ENCODE measurements at regions of chr2 and their contacts with region 1.

Region 1: DNA sequence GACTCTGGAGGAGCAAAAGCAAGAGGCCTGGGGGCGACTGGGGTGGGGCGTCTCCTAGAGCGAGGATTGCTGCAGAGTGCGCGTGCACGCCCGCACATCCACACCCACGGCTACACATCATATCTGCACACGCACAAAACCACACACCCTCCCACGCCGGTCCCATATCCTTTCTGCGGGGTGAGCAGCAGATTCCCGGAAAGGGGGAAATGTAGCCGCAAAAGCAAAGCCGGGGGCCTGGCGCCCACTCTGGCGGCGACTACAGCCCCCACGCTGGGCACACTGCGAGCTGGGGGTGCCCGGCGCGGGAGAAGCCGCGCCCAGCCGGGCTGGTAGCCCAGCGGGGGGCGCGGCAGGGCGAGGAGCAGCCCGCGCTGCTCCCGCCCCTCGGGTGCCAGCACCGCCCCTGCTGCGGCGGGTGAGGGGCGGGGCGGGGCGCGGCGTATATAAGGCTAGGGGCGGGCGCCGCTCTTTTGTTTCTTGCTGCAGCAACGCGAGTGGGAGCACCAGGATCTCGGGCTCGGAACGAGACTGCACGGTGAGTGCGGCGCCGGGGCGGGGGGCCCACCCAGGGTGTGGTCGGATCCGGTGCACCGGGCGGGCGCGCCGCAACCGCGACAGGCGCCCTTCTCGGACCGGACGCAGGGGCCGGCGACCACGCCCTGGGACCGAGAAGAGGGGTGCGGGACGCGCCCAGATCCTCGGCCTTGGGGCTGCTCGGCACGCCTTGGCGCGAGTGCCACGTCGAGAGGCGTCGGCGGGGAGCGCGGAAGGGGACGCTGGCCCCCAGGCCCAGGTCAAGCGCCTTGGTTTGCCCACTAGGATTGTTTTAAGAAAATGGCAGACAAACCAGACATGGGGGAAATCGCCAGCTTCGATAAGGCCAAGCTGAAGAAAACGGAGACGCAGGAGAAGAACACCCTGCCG is at the start of gene TMSB10:
- DNase-seq: peak in 1 of 2 experiments; percentile 87
- H3K4me3 ChIP-seq: peak within 1 kb of the TSS; percentile 82 to 99 (median 90)
- H3K27ac ChIP-seq: peak within 1 kb of the TSS; percentile 62; the same call in 1 of the 2 replicates
- H3K4me1 ChIP-seq: peaks cover 0 to 14% (median 7%) of the 10 kb centered on the region in 4 experiments
- H3K27me3 ChIP-seq: peaks cover 0 to 10% (median 8%) of the 10 kb centered on the region in 4 experiments; a peak in 6 of 7 replicates
- CTCF ChIP-seq: no peak
- EP300 ChIP-seq: no peak
- POLR2A ChIP-seq: peak in 1 of 2 experiments; percentile 70; a peak in 2 of 3 replicates
- RAD21 ChIP-seq: no peak
- total RNA-seq, gene TMSB10: 1,075 and 1,095 TPM in 2 replicates

Region 2: GRCh38 chr2:84881581-84882414 is 23.6 kb before region 1 on chr2:
- CTCF ChIA-PET with region 1: interaction called, 31 read pairs
- POLR2A ChIA-PET with region 1: interaction called, 3 read pairs
- DNase-seq: peak in 1 of 2 experiments; percentile 92
- H3K4me3 ChIP-seq: peak overlapping the region; percentile 48 to 75 (median 62)
- H3K27ac ChIP-seq: no peak overlapping the region
- H3K4me1 ChIP-seq: peaks cover 0 to 3% (median under 1%) of the 10 kb centered on the region in 4 experiments; a peak in 3 of 7 replicates
- H3K27me3 ChIP-seq: peaks cover 12 to 42% (median 39%) of the 10 kb centered on the region in 4 experiments
- CTCF ChIP-seq: peak; percentile 66 to 86 (median 72)
- EP300 ChIP-seq: no peak
- POLR2A ChIP-seq: peak in 1 of 2 experiments; percentile 12; a peak in 1 of 3 replicates
- RAD21 ChIP-seq: peak; percentile 80 to 82

Region 3: DNA sequence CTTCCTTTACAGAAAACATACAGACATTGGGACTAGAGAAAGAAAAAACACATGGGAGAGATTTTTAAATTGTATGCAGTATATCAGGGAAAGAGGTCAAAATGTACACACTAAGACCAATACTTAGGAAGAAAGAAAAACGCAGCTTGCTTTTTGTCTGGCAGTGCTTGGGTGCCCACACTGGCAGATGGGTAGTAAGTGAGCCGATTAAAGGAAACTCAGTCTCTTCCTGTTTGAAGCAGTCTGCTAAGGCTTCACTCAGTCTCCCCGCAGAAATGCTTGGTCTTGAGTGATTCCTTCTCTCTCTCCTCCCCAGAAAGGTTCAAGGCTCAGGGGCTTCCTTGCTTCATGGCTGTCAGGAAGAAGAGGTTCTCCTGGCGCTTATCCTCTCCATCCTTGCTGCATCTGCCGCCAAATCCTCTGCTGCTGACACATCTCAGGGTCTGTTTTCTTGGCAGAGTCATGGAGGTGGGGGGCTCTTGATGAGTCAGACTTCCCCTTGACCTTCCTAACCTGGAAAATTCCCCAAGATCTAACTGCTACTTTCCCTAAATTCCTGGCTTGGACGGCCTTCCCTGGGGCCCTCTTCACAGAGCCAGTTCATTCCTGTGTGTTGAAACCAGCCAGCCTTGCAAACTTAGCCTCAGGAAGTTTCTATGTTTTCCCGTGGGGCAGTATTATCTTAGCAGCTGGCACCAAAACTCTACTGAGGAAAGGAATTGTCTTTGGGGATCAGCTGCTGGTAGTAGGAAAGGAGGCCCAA is 10.5 kb before region 1 on chr2:
- CTCF ChIA-PET with region 1: no interaction called
- POLR2A ChIA-PET with region 1: interaction called, 23 read pairs
- DNase-seq: no peak
- H3K4me3 ChIP-seq: no peak overlapping the region
- H3K27ac ChIP-seq: no peak overlapping the region
- H3K4me1 ChIP-seq: peaks cover 2 to 7% (median 5%) of the 10 kb centered on the region in 4 experiments; a peak in 5 of 7 replicates
- H3K27me3 ChIP-seq: no peaks in the 10 kb centered on the region
- CTCF ChIP-seq: no peak
- EP300 ChIP-seq: no peak
- POLR2A ChIP-seq: no peak
- RAD21 ChIP-seq: no peak

Region 4: DNA sequence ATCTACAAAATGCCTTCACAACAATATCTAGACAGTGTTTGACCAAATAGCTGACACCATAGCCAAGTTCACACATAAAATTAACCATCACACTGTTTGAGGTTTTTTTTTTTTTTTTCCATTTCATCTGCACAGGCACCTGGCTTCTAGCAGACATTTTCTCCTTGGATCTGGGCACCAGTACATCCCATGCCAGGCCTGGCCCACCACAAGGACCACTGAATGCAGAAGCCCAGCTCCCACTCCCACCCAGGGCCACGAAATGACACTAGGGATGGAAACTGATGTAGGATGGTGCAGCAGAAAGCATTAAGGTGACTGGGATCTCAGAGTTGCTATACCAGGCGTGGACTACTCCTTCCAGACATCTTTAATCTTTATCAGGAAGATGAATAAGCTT is 13.0 kb after region 1 on chr2:
- CTCF ChIA-PET with region 1: interaction called, 5 read pairs
- POLR2A ChIA-PET with region 1: interaction called, 25 read pairs
- DNase-seq: no peak
- H3K4me3 ChIP-seq: no peak overlapping the region
- H3K27ac ChIP-seq: no peak overlapping the region
- H3K4me1 ChIP-seq: no peaks in the 10 kb centered on the region
- H3K27me3 ChIP-seq: no peaks in the 10 kb centered on the region
- CTCF ChIP-seq: no peak
- EP300 ChIP-seq: no peak
- POLR2A ChIP-seq: no peak
- RAD21 ChIP-seq: no peak

Region 5: DNA sequence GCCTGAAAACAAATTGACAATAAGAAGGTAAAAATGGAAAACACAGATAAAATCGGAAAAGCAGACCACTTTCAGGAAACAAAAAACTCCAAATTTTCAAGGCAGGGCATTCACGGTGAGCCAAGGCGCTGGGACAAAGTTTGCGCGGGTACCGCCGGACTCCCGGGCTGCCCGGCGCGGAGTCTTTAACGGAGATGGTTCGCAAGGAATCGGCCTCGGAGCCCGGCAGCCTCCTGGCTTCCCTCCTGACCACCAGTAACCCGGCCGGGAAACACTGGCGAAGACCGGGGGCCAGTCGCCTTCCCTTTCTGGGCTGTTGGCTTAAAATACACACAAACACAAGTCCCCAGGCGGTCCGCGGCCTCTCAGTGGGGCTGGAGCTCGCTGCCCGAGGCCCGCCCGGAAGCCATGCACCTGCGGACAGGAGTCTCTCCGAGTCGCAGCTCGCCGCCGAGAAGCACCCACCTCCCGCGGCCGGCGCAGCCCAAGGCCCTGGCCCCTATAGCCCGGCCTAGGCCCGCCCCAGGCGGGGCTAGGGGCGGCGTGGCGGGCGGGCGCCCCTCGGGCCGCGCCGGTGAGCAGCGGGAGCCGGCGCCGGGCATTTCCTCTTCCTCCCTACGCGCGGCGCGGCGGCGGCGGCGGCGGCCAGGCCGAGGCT is 64.9 kb after region 1 on chr2:
- CTCF ChIA-PET with region 1: no interaction called
- POLR2A ChIA-PET with region 1: no interaction called
- DNase-seq: peak in 1 of 2 experiments; percentile 77
- H3K4me3 ChIP-seq: peak overlapping the region; percentile 95 to 99 (median 96)
- H3K27ac ChIP-seq: peak overlapping the region; percentile 95
- H3K4me1 ChIP-seq: peaks cover 0 to 5% (median 5%) of the 10 kb centered on the region in 4 experiments; a peak in 5 of 7 replicates
- H3K27me3 ChIP-seq: no peaks in the 10 kb centered on the region
- CTCF ChIP-seq: no peak
- EP300 ChIP-seq: no peak
- POLR2A ChIP-seq: peak in 1 of 2 experiments; percentile 62; a peak in 2 of 3 replicates
- RAD21 ChIP-seq: no peak

Region 6: GRCh38 chr2:85255813-85256594 is 350.6 kb after region 1 on chr2:
- CTCF ChIA-PET with region 1: no interaction called
- POLR2A ChIA-PET with region 1: no interaction called
- DNase-seq: peak in 1 of 2 experiments; percentile 81
- H3K4me3 ChIP-seq: peak overlapping the region; percentile 1 to 48 (median 30); a peak in 7 of 8 replicates
- H3K27ac ChIP-seq: peak overlapping the region; percentile 97
- H3K4me1 ChIP-seq: peaks cover 43 to 65% (median 57%) of the 10 kb centered on the region in 4 experiments
- H3K27me3 ChIP-seq: no peaks in the 10 kb centered on the region
- CTCF ChIP-seq: no peak
- EP300 ChIP-seq: peak in 1 of 2 experiments; percentile 72; a peak in 1 of 3 replicates
- POLR2A ChIP-seq: peak; percentile 37 to 69
- RAD21 ChIP-seq: peak in 1 of 2 experiments; percentile 27; a peak in 2 of 4 replicates